ENCODE measurements at regions of chr7 and their contacts with region 1.

Region 1: GRCh38 chr7:101058355-101058754 is 26.9 kb upstream of the TRIM56 start:
- DNase-seq: peak; percentile 61
- ATAC-seq: no peak
- H3K4me3 Mint-ChIP-seq: no peak overlapping the region
- H3K27ac Mint-ChIP-seq: no peak overlapping the region
- H3K4me1 Mint-ChIP-seq: peaks cover 5% of the 10 kb centered on the region
- H3K27me3 Mint-ChIP-seq: peaks cover 30% of the 10 kb centered on the region
- CTCF ChIP-seq: no peak

Region 2: DNA sequence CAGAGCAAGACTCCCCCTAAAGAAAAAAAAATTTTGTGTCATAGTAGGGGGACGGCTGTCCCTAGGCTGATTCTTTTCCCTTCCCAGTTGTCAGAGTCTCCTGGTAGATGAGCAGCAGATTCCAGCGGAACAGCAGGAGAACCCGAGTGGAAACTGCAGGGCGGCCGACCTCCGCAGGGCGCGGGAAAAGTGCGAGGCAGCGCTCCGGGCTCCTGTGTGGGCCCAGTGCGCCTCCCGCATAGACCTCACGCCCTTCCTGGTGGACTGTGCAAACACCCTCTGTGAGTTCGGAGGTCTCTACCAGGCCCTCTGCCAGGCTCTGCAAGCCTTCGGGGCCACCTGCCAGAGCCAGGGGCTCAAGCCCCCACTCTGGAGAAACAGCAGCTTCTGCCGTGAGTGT is 279.0 kb before region 1 on chr7:
- CTCF ChIA-PET with region 1: no interaction called
- POLR2A ChIA-PET with region 1: no interaction called
- intact Hi-C with region 1: no loop called
- DNase-seq: no peak
- ATAC-seq: no peak
- H3K4me3 Mint-ChIP-seq: no peak overlapping the region
- H3K27ac Mint-ChIP-seq: no peak overlapping the region
- H3K4me1 Mint-ChIP-seq: no peaks in the 10 kb centered on the region
- H3K27me3 Mint-ChIP-seq: peaks cover 10% of the 10 kb centered on the region
- CTCF ChIP-seq: no peak

Region 3: DNA sequence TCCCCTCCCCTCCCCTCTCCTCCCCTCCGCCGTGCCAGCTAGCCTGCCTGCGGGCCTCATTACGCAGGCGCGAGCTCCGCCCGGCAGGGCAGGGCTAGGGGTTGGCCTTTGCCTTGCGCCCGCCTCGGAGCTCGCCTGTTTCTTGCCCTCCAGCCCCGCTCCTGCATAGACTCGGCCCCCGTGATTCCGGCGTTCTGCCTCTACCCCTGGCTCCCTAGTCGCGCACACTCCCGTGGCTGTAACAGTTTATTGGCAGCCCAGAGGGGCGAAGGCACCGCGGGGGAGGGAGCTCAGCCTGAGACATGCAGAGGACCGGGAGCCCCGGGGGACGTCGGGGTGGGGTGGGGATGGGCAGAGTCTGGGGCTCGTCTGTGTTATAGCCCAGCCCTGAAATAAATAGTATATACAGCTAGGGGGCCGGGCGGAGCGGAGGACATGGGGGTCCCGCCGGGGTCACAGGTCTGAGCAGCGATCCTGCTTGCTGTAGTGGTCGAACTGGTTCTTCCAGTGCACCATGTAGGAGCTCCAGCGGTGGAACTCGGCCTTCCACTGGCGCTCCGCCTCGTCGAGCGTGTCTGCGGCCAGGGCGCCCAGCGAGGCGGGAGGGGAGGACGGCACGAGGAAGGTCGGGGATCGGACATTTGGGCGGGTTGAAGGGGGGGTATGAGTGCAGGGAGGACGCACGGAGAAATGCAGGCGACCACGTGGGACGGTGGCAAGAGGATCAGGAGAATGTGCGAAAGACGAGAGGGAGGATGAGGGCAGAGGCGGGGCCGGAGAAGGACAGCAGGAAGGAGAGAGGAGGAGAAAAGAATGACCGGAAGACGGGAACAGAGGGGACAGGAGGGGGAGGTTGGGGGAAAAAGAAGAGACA is 168.4 kb before region 1 on chr7:
- CTCF ChIA-PET with region 1: interaction called, 15 read pairs
- POLR2A ChIA-PET with region 1: no interaction called
- intact Hi-C with region 1: no loop called
- DNase-seq: peak; percentile 92
- ATAC-seq: peak; percentile 92
- H3K4me3 Mint-ChIP-seq: peak overlapping the region; percentile 73
- H3K27ac Mint-ChIP-seq: peak overlapping the region; percentile 75
- H3K4me1 Mint-ChIP-seq: peaks cover 37% of the 10 kb centered on the region
- H3K27me3 Mint-ChIP-seq: peaks cover 26% of the 10 kb centered on the region
- CTCF ChIP-seq: no peak

Region 4: GRCh38 chr7:100896732-100897608 is 161.4 kb before region 1 on chr7:
- CTCF ChIA-PET with region 1: interaction called, 19 read pairs
- POLR2A ChIA-PET with region 1: no interaction called
- intact Hi-C with region 1: loop called (anchors 2 kb)
- DNase-seq: peak; percentile 62
- ATAC-seq: peak; percentile 55
- H3K4me3 Mint-ChIP-seq: peak overlapping the region; percentile 8
- H3K27ac Mint-ChIP-seq: no peak overlapping the region
- H3K4me1 Mint-ChIP-seq: peaks cover 7% of the 10 kb centered on the region
- H3K27me3 Mint-ChIP-seq: peaks cover 43% of the 10 kb centered on the region
- CTCF ChIP-seq: peak; percentile 74

Region 5: DNA sequence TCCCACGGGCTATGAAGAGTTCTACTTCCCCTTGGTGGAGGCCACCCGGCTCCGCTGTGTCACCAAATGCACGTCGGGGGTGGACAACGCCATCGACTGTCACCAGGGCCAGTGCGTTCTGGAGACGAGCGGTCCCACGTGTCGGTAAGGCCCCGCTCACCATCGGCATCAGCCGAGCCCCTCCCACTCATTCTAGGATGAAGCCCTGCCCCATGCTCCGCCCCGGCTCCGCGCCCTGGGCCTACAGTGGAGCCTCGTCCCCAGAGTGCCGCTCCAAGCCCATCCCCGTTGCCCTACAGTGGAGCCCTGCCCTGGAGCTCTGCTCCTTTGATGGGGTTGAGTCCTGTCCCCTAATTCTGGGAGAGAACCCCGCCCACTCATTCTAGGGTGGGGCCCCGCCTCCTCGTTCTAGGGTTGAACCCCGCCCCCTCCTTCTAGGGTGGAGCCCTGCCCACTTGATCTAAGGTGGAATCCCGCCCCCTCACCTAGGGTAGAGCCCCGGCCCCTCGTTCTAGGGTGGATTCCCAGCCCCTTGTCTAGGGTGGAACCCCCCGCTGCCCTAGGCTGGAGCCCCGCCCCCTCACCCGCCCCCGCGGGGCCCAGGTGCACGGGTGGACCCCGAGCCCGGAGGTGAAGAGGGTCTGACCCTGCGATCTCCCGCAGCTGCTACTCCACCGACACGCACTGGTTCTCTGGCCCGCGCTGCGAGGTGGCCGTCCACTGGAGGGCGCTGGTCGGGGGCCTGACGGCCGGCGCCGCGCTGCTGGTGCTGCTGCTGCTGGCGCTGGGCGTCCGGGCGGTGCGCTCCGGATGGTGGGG is 92.4 kb before region 1 on chr7:
- CTCF ChIA-PET with region 1: interaction called, 6 read pairs
- POLR2A ChIA-PET with region 1: no interaction called
- intact Hi-C with region 1: loop called (anchors 5 kb)
- DNase-seq: peak; percentile 85
- ATAC-seq: peak; percentile 84
- H3K4me3 Mint-ChIP-seq: peak overlapping the region; percentile 48
- H3K27ac Mint-ChIP-seq: no peak overlapping the region
- H3K4me1 Mint-ChIP-seq: peaks cover 13% of the 10 kb centered on the region
- H3K27me3 Mint-ChIP-seq: peaks cover 53% of the 10 kb centered on the region
- CTCF ChIP-seq: peak; percentile 88

Region 6: GRCh38 chr7:101125989-101126650 is 67.8 kb after region 1 on chr7:
- CTCF ChIA-PET with region 1: no interaction called
- POLR2A ChIA-PET with region 1: no interaction called
- intact Hi-C with region 1: no loop called
- DNase-seq: peak; percentile 33
- ATAC-seq: no peak
- H3K4me3 Mint-ChIP-seq: no peak overlapping the region
- H3K27ac Mint-ChIP-seq: no peak overlapping the region
- H3K4me1 Mint-ChIP-seq: peaks cover 36% of the 10 kb centered on the region
- H3K27me3 Mint-ChIP-seq: peaks cover 59% of the 10 kb centered on the region
- CTCF ChIP-seq: no peak

Measured in activated CD8-positive, alpha-beta T cell treated with anti-CD3 and anti-CD28 coated beads for 36 hours (primary cell).